ENCODE measurements at regions of chr14 and their contacts with region 1.

Region 1: GRCh38 chr14:69398053-69398817 is at the starts of genes ERH and SLC39A9:
- DNase-seq: peak; percentile 91
- H3K4me3 Mint-ChIP-seq: peak within 1 kb of the TSS; percentile 96
- H3K27ac Mint-ChIP-seq: peak within 1 kb of the TSS; percentile 98
- H3K4me1 Mint-ChIP-seq: peaks cover 63% of the 10 kb centered on the region
- H3K27me3 Mint-ChIP-seq: no peaks in the 10 kb centered on the region
- total RNA-seq, gene ERH: 400 and 421 TPM in 2 replicates
- total RNA-seq, gene SLC39A9: 51.6 and 53.7 TPM in 2 replicates

Region 2: DNA sequence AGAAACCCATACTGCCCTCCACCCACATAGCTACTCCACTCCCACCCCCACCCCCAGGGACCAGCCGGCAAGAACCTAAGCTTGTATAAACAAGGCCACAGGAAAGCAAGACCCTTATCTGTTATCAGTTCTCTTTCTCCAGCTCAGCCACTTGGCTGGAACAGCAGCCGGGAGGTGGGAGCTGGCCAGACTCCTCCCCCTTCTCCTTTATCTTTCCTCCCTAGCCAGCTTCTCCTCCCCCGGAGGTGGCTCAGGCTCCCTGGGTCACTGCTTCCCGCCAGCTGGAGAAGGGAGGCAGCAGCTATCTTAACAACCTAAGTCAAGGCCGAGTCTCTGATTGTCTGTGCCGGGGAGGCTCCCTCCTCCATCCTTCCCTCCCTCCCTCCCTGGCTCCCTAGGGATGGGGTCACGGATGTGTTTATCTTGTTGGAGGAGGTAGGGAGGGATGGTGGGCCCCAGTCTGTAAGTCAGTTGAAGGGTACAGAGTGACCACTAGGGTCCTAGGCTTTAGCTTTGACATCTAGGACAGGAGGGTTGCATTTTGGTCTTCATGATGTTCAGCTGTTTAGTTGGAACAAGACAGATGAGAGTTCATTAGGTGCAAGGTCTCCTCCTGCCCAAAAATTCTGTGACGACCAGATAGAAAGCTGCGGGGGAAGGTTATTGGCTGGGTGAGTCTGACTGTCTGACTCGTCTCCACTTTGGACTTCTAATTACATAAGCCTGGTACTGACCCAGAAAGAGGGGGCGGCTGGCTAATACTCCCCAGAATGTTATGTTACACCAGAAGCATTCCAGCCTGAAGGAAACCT is 635.1 kb before region 1 on chr14:
- intact Hi-C with region 1: no loop called
- DNase-seq: no peak
- H3K4me3 Mint-ChIP-seq: no peak overlapping the region
- H3K27ac Mint-ChIP-seq: no peak overlapping the region
- H3K4me1 Mint-ChIP-seq: peaks cover 27% of the 10 kb centered on the region
- H3K27me3 Mint-ChIP-seq: peaks cover 9% of the 10 kb centered on the region

Region 3: GRCh38 chr14:69153131-69153872 is 244.9 kb before region 1 on chr14:
- intact Hi-C with region 1: loop called (anchors 1 kb)
- DNase-seq: peak; percentile 90
- H3K4me3 Mint-ChIP-seq: peak overlapping the region; percentile 90
- H3K27ac Mint-ChIP-seq: peak overlapping the region; percentile 92
- H3K4me1 Mint-ChIP-seq: peaks cover 33% of the 10 kb centered on the region
- H3K27me3 Mint-ChIP-seq: peaks cover 39% of the 10 kb centered on the region

Region 4: GRCh38 chr14:69242311-69243224 is 155.7 kb before region 1 on chr14:
- intact Hi-C with region 1: loop called (anchors 5 kb)
- DNase-seq: peak; percentile 27
- H3K4me3 Mint-ChIP-seq: no peak overlapping the region
- H3K27ac Mint-ChIP-seq: no peak overlapping the region
- H3K4me1 Mint-ChIP-seq: no peaks in the 10 kb centered on the region
- H3K27me3 Mint-ChIP-seq: peaks cover 2% of the 10 kb centered on the region

Region 5: GRCh38 chr14:69335371-69335771 is 62.9 kb before region 1 on chr14:
- intact Hi-C with region 1: no loop called
- DNase-seq: no peak
- H3K4me3 Mint-ChIP-seq: no peak overlapping the region
- H3K27ac Mint-ChIP-seq: no peak overlapping the region
- H3K4me1 Mint-ChIP-seq: no peaks in the 10 kb centered on the region
- H3K27me3 Mint-ChIP-seq: peaks cover 9% of the 10 kb centered on the region

Region 6: DNA sequence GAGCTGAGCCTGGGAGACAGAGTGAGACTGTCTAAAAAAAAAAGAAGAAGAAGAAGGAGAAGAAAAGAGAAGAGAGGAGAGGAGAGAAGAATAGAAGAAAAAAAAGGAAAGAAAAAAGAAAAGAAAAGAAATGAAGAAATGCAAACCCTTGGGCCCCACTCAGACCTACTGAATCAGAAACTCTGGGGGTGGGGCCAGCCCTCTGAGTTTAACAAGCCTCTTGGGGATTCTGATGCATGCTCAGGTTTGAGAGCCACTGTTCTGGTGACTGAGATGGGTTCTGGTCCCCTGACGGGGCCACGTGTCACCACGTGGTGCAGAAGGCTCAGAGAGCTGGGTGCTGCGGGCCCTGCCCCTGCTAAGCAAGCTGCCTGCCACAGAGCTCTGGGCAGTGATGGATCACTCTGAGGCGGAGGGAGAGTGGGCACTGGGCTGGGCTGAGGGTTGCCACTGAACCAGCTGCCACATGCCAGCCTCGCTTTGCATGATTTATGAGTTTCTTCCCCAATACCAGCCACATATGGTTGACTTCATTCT is 37.6 kb before region 1 on chr14:
- intact Hi-C with region 1: no loop called
- DNase-seq: no peak
- H3K4me3 Mint-ChIP-seq: no peak overlapping the region
- H3K27ac Mint-ChIP-seq: no peak overlapping the region
- H3K4me1 Mint-ChIP-seq: peaks cover 21% of the 10 kb centered on the region
- H3K27me3 Mint-ChIP-seq: peaks cover 2% of the 10 kb centered on the region

Region 7: GRCh38 chr14:69460093-69460701 is 62.0 kb after region 1 on chr14:
- intact Hi-C with region 1: loop called (anchors 1 kb)
- DNase-seq: peak; percentile 40
- H3K4me3 Mint-ChIP-seq: no peak overlapping the region
- H3K27ac Mint-ChIP-seq: no peak overlapping the region
- H3K4me1 Mint-ChIP-seq: no peaks in the 10 kb centered on the region
- H3K27me3 Mint-ChIP-seq: no peaks in the 10 kb centered on the region

Region 8: DNA sequence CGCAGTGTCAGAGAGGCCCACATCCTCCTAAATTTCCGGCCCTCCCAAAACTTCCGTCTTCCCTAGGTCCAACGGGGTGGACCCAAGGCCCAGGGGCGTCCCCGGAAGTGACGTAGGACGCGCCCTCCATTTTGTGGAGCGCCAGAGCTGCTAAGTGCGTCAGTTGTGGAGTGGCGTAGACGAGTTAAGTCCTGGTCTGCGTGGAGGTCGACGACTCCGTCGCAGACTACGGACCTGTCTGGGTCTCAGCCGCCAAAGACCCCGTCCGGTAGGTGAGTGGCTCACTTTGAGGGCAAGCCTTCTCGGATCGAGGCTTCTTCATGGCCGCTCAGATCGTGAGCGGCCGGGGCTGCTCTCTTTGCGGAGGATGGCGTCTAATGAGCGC is 368.7 kb after region 1 on chr14 and contains the start of gene SRSF5:
- intact Hi-C with region 1: loop called (anchors 1 kb)
- DNase-seq: peak; percentile 92
- H3K4me3 Mint-ChIP-seq: peak within 1 kb of the TSS; percentile 94
- H3K27ac Mint-ChIP-seq: peak within 1 kb of the TSS; percentile 98
- H3K4me1 Mint-ChIP-seq: peaks cover 68% of the 10 kb centered on the region
- H3K27me3 Mint-ChIP-seq: peaks cover 2% of the 10 kb centered on the region
- total RNA-seq, gene SRSF5: 304 and 311 TPM in 2 replicates

Region 9: GRCh38 chr14:70600382-70601157 is 1202.3 kb after region 1 on chr14 and contains the start of gene MED6:
- intact Hi-C with region 1: loop called (anchors 2 kb)
- DNase-seq: peak; percentile 89
- H3K4me3 Mint-ChIP-seq: peak within 1 kb of the TSS; percentile 100
- H3K27ac Mint-ChIP-seq: peak within 1 kb of the TSS; percentile 92
- H3K4me1 Mint-ChIP-seq: peaks cover 18% of the 10 kb centered on the region
- H3K27me3 Mint-ChIP-seq: peaks cover 4% of the 10 kb centered on the region
- total RNA-seq, gene MED6: 59.3 and 63.7 TPM in 2 replicates